ENCODE measurements at regions of chr1 and their contacts with region 1.

Region 1: GRCh38 chr1:18597160-18598042 is 33.2 kb upstream of the PAX7 start:
- DNase-seq: peak; percentile 90

Region 2: GRCh38 chr1:18820791-18821641 is 223.6 kb after region 1 on chr1:
- intact Hi-C with region 1: loop called in 1 of 2 experiments (anchors 2 kb)
- DNase-seq: peak; percentile 91

Region 3: DNA sequence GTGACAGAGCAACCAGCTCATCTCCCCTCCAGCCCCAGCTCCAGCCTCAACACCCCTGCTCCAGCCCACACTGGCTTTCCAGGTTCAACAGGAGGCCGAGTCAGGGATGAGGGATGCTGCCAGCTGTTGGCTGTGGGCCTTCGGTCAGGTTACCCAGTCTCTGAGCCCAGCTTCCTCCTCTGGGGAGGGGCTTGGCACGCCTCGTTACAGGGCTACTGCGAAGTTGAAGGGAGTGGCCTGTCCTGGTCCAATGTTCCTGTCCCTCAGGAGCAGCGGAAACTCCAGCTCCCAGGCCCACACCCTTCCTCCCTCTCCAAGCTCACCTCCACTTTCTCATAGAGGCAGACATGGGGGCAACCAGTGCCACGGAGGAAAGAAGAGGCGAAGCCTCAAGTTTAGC is 277.2 kb after region 1 on chr1:
- intact Hi-C with region 1: loop called (anchors 5 kb)
- DNase-seq: no peak

Region 4: GRCh38 chr1:18956369-18957135 is 359.2 kb after region 1 on chr1 and contains the start of gene IFFO2:
- intact Hi-C with region 1: no loop called
- DNase-seq: peak; percentile 99
- total RNA-seq, gene IFFO2: 12.1 to 12.2 TPM

Measured in posterior vena cava (tissue), 2 donors.